ENCODE measurements at regions of chr22 and their contacts with region 1.

Region 1: DNA sequence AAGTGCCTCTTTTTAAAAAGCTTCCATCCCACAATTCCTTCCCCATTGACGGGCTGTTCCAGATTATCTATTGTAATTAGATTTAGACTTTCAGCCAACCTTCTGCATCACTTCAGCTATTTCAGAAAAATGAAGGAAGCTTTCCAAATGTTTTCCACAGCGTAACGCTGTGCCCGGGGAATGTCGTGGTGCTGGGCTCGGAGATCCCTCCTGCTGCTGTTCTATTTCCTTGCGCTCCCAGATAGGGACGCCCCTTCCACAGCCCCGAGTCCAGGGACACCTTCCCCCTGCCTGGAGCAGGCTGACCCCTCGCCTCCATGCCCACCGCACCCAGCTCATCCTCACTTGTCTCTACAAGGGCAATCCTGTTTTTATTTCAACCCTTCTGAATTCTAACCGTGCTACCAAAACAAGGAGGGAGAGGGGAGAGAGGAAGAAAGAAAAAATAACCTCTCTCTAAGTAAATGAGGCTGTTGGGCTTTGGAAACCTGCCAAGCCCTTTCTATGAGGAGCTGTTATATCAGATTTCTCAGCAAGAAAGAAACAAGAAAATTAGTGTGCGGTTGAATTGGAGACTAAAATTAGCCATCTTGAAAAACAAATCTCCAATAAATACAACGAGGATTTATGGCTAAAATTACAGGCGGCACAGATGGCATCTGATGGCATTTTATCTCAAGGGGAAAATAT is 366.9 kb downstream of the BRD1 start:
- DNase-seq: no peak

Region 2: DNA sequence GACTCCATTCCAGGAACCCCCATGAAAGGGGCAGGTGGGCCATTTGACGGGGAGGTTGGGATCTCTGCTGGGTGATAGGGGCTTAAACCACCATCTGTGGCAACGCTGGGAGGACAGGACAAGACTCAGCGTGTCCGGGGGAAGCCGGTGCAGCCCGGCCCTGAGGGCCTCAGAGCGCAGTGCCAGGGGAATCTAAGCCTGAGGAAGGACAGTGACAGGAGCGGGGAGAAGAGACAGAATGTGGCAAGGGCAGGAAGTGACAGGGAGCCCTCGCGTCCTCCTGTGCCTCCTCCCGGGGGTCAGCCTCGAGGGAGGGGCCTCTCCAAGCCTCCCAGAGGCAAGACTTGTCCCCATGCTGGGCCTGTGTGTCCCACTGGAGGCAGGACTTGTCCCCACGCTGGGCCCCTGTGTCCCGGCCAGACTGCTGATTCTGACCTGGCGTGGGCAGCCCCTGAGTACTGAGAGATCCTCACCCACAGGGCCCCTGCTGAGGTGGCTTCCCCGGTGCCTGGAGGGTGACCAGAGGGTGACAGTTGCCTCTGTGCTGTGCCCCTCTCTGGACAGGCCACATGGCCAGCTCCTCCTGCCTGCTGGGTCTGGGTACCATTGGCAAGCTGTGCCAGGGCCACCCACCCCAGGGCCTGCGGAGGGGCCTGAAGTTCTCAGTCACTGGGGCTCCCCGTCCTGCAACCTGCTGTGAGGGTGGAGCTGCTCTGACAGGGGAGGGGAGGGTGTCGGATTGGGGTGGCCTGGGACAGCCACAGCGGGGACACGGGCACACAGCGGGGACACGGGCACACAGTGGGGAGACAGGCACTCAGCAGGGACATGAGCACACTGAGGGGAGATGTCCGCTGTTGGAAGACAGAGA is 309.2 kb before region 1 on chr22:
- intact Hi-C with region 1: no loop called
- DNase-seq: peak; percentile 62

Region 3: GRCh38 chr22:49354516-49355210 is 106.1 kb before region 1 on chr22:
- intact Hi-C with region 1: no loop called
- DNase-seq: no peak

Region 4: GRCh38 chr22:49507607-49508292 is 47.0 kb after region 1 on chr22:
- intact Hi-C with region 1: loop called in 1 of 2 experiments (anchors 1 kb)
- DNase-seq: no peak

Region 5: DNA sequence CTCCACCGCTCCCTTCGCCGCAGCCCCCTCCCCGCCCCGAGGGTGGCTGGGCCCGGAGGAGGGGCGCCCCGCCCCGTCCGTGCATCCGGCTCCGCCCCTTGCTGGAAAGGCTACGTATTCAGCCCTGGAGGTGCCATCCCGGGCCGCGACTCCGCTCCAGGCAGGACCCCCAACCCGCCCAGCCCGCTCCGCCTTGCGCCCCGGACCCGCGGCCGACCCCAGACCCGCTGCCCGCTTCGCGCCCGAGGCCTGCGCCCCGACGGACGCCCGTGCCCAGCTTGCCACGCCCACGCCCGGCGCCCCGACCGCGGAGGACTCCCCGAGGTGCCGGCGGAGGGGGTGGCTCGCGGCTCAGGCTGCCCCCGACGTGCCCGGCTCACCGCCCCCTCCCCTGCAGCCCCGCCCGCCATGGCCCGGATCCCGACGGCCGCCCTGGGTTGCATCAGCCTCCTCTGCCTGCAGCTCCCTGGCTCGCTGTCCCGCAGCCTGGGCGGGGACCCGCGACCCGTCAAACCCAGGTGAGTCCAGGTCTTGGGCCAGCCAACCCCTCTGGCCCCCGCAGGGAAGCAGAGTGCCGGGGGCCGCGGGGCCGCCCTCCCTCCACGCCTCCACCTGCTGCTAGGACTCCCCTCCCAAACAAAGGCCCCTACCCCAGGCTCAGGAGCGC is 1020.8 kb after region 1 on chr22 and contains the start of gene ADM2:
- intact Hi-C with region 1: no loop called
- DNase-seq: no peak
- total RNA-seq, gene ADM2: 0.14 to 0.56 TPM